Heart left ventricle (tissue), 16 donors: ENCODE measurements at regions of chr17 and their contacts with region 1.

Region 1: GRCh38 chr17:4004517-4005295 is 40.5 kb upstream of the ATP2A3 start:
- DNase-seq: peak; percentile 51 to 84 (median 57)
- ATAC-seq: peak in 3 of 4 donors; percentile 52 to 70 (median 63)
- H3K4me3 ChIP-seq: no peak overlapping the region
- H3K27ac ChIP-seq: peak overlapping the region in 2 of 12 donors; percentile 41 to 59
- H3K4me1 ChIP-seq: peaks cover 0 to 39% (median 6%) of the 10 kb centered on the region in 12 donors
- H3K27me3 ChIP-seq: no peaks in the 10 kb centered on the region
- CTCF ChIP-seq: peak; percentile 80 to 97 (median 94)
- POLR2A ChIP-seq: peak in 1 of 2 donors; percentile 13

Region 2: GRCh38 chr17:3738562-3739295 is 266.0 kb before region 1 on chr17:
- intact Hi-C with region 1: loop called in 3 of 10 experiments (anchors 10 kb)
- DNase-seq: no peak
- ATAC-seq: peak in 3 of 4 donors; percentile 47 to 64 (median 52)
- H3K4me3 ChIP-seq: peak overlapping the region in 2 of 12 donors; percentile 46 to 49
- H3K27ac ChIP-seq: peak overlapping the region in 2 of 12 donors; percentile 15 to 48
- H3K4me1 ChIP-seq: peaks cover 0 to 13% (median 6%) of the 10 kb centered on the region in 12 donors
- H3K27me3 ChIP-seq: peaks cover 0 to 8% (median 0%) of the 10 kb centered on the region in 9 donors
- CTCF ChIP-seq: no peak
- POLR2A ChIP-seq: no peak

Region 3: GRCh38 chr17:3865176-3865575 is 139.5 kb before region 1 on chr17:
- intact Hi-C with region 1: loop called in 7 of 10 experiments (anchors 2 to 10 kb)
- DNase-seq: peak in 2 of 5 donors; percentile 44 to 48
- ATAC-seq: peak in 2 of 4 donors; percentile 62 to 65
- H3K4me3 ChIP-seq: no peak overlapping the region
- H3K27ac ChIP-seq: no peak overlapping the region
- H3K4me1 ChIP-seq: peaks cover 0 to 9% (median 0%) of the 10 kb centered on the region in 12 donors
- H3K27me3 ChIP-seq: no peaks in the 10 kb centered on the region
- CTCF ChIP-seq: no peak
- POLR2A ChIP-seq: no peak

Region 4: DNA sequence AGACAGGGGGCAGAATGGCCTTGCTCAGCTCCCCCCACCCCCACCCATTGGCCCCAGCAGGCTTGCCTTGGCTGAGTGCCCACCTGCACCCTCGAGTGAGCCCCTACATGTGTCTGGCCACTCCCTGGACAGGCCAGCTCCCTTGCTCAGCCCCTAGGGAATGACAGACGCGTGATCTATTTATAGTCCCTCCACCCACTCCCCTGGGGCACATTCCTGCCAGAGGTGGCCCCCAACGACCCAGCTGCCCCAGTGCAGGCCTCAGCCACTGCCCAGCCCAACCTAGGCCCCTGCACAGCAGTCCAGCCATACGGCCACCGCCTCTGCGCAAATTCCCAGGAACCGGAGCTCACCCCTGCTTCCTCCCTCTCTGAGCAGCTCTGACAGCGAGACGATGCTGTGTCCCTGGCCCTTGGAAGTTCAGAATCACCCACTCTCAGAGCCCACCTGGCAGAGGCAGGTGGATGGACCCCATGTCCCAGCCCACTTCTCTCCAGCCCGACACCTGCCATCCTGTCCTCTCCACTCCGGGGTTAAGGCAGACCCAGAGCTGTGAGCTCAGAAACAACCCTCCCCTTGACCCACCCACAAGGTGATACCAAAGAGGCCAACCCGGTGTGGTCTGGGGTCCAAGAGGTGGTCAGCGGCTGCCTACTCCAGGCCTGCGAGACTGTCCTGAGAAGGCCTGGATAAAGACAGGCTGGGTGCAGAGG is 76.9 kb before region 1 on chr17:
- intact Hi-C with region 1: loop called in 1 of 10 experiments (anchors 5 kb)
- DNase-seq: peak in 1 of 5 donors; percentile 46
- ATAC-seq: peak; percentile 44 to 76 (median 54)
- H3K4me3 ChIP-seq: no peak overlapping the region
- H3K27ac ChIP-seq: peak overlapping the region in 1 of 12 donors; percentile 32
- H3K4me1 ChIP-seq: peaks cover 0 to 23% (median 7%) of the 10 kb centered on the region in 12 donors
- H3K27me3 ChIP-seq: no peaks in the 10 kb centered on the region
- CTCF ChIP-seq: no peak
- POLR2A ChIP-seq: no peak

Region 5: DNA sequence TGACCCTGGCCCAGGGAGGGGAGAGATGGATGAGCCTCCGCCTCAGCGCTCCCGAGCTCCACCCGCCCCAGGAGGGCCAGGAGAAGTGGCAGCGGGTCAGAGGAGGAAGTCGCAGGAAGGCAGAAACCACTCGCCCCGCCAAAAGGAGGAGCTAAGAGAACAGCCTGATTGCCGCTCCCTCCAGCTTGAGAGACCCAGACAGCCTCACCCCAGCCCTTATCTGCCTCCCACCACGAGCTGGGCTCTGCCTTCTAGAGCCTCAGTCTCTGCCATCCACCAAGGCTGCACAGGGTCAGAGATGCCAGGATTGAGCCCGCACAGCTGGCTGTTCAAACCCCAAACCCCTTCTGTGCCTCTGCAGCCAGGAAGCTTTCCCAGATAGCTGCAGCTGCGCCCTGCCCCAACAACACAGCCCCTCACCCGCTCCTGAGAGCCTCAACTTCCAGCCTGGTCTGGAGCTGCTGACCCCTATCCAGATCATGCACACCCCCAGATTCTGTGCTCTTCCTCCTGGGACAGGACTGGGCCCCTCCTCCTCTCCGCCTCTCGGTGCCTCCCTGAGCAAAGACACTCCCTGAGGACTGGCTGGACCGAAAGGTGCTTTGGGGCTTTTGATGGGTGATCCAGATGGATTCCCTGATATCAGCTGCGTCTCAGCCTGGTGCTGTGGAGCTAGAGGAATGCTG is 39.4 kb before region 1 on chr17:
- intact Hi-C with region 1: loop called in 3 of 10 experiments (anchors 1 to 5 kb)
- DNase-seq: peak; percentile 65 to 82 (median 68)
- ATAC-seq: peak in 3 of 4 donors; percentile 67 to 73 (median 72)
- H3K4me3 ChIP-seq: peak overlapping the region in 10 of 12 donors; percentile 21 to 69 (median 56)
- H3K27ac ChIP-seq: peak overlapping the region in 11 of 12 donors; percentile 0 to 86 (median 40)
- H3K4me1 ChIP-seq: peaks cover 0 to 46% (median 21%) of the 10 kb centered on the region in 12 donors
- H3K27me3 ChIP-seq: peaks cover 3 to 29% (median 11%) of the 10 kb centered on the region in 9 donors
- CTCF ChIP-seq: peak in 3 of 12 donors; percentile 3 to 25 (median 10)
- POLR2A ChIP-seq: no peak

Region 6: DNA sequence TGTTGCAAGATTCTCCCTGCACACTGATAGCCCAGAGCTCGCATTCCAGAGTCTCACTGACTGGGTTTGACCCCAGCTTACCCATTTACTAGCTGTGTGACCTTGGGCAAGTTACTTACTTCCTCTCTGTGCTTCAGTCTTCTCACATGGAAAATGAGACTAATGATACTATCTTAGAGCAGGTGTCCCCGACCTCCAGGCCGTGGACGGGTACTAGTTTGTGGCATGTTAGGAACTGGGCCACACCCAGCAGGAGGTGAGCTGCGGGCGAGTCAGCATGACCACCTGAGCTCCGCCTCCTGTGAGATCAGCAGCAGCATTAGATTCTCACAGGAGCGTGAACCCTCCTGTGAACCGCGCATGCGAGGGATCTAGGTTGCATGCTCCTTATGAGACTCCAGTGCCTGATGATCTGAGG is 243.3 kb after region 1 on chr17:
- intact Hi-C with region 1: no loop called
- DNase-seq: no peak
- ATAC-seq: peak in 1 of 4 donors; percentile 28
- H3K4me3 ChIP-seq: no peak overlapping the region
- H3K27ac ChIP-seq: peak overlapping the region in 5 of 12 donors; percentile 1 to 55 (median 35)
- H3K4me1 ChIP-seq: peaks cover 0 to 61% (median 30%) of the 10 kb centered on the region in 12 donors
- H3K27me3 ChIP-seq: no peaks in the 10 kb centered on the region
- CTCF ChIP-seq: no peak
- POLR2A ChIP-seq: no peak